ENCODE measurements at regions of chr1 and their contacts with region 1.

Region 1: DNA sequence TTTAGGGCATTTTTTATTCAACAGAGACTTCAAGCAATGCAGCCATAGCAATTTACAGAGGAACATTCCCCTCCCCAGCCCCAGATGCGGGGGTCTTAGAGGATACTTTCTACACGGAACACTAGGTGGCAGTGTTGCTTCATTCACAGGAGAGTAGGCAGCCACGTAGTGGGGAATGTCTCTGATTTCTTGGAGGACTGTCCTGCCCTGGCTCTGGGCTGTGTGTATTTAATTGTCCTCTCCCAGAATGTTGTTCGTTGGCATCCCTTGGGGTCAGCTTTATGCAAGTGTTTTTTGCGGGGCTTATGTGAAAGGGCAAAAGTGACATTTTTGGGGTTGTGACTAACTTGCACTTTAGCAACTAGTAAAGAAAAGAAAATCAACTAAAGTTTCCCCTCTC is 96.9 kb downstream of the PAPPA2 start:
- DNase-seq: peak; percentile 79
- H3K4me3 ChIP-seq: no peak overlapping the region
- H3K27ac ChIP-seq: no peak overlapping the region
- H3K4me1 ChIP-seq: no peaks in the 10 kb centered on the region
- H3K27me3 ChIP-seq: peaks cover 23% of the 10 kb centered on the region
- CTCF ChIP-seq: peak; percentile 89

Region 2: DNA sequence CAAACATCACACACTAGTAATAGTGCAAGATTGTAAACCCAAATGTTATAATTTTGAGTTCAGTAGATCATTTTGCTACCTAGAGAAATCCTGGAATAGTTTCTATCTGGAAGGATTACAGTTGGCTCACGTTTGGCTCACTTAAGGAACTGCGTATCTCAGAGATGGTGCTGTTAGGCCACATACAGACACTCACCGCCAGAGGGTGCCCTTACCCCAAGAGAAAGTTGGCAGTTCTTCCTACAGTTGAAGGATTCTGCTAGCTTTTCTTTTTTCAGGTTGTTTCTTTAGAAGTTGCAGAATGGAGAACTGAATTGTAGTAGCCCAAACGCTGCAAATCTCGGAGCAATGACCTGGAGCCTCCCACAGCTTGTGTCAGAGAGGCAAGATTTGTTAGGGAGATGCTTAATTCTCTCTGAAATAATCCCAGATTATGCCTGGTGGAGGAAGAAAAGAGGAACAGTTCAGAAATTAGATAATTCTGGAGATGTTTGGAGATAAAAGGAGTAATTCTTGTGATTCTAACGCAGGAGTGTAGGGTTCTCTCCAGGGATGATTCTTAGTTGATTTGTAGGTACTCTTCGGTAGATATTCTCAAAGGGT is 184.8 kb before region 1 on chr1:
- CTCF ChIA-PET with region 1: no interaction called
- POLR2A ChIA-PET with region 1: no interaction called
- intact Hi-C with region 1: loop called (anchors 10 kb)
- DNase-seq: peak; percentile 75
- H3K4me3 ChIP-seq: no peak overlapping the region
- H3K27ac ChIP-seq: no peak overlapping the region
- H3K4me1 ChIP-seq: no peaks in the 10 kb centered on the region
- H3K27me3 ChIP-seq: no peaks in the 10 kb centered on the region
- CTCF ChIP-seq: peak; percentile 90

Region 3: GRCh38 chr1:176691251-176692228 is 131.7 kb after region 1 on chr1:
- CTCF ChIA-PET with region 1: interaction called, 5 read pairs
- POLR2A ChIA-PET with region 1: no interaction called
- intact Hi-C with region 1: loop called (anchors 1 kb)
- DNase-seq: peak; percentile 54
- H3K4me3 ChIP-seq: no peak overlapping the region
- H3K27ac ChIP-seq: no peak overlapping the region
- H3K4me1 ChIP-seq: no peaks in the 10 kb centered on the region
- H3K27me3 ChIP-seq: peaks cover 4% of the 10 kb centered on the region
- CTCF ChIP-seq: peak; percentile 80

Region 4: GRCh38 chr1:176741181-176741580 is 181.3 kb after region 1 on chr1:
- CTCF ChIA-PET with region 1: no interaction called
- POLR2A ChIA-PET with region 1: no interaction called
- intact Hi-C with region 1: loop called (anchors 5 kb)
- DNase-seq: no peak
- H3K4me3 ChIP-seq: no peak overlapping the region
- H3K27ac ChIP-seq: no peak overlapping the region
- H3K4me1 ChIP-seq: no peaks in the 10 kb centered on the region
- H3K27me3 ChIP-seq: peaks cover 51% of the 10 kb centered on the region
- CTCF ChIP-seq: no peak

Region 5: GRCh38 chr1:176843352-176844297 is 283.7 kb after region 1 on chr1:
- CTCF ChIA-PET with region 1: no interaction called
- POLR2A ChIA-PET with region 1: no interaction called
- intact Hi-C with region 1: loop called (anchors 1 kb)
- DNase-seq: peak; percentile 65
- H3K4me3 ChIP-seq: no peak overlapping the region
- H3K27ac ChIP-seq: no peak overlapping the region
- H3K4me1 ChIP-seq: peaks cover 3% of the 10 kb centered on the region
- H3K27me3 ChIP-seq: no peaks in the 10 kb centered on the region
- CTCF ChIP-seq: peak; percentile 59

Region 6: DNA sequence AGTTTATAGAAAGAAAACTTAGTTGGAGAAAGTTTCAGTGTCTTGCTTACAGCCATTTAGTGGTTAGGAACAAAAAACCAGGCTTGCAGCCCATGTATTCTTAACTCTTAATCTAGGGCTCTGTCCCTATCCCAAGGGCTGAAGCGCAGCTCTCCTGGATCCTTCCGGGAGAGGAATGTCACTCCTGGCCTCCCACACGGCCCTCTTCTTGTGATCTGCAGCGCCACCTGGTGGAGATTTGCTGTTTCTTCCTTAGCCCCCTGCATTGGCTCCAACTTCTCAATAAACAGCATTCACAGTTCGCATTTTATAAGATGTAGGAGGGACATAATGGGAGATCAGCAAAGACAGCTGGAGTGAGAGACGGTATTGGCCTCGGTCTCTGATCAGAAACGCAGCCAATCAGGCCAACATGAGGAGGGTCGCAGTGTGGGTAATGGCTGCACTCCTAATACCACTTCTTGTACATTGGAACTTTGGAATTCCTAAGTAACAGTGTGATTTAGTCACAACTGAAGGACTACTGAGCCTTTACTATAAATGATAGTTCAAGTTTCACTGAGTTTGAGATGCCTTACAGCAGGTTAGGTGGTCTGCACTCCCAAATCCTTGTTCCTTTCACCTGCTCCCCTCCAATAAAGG is 321.2 kb after region 1 on chr1:
- CTCF ChIA-PET with region 1: interaction called, 6 read pairs
- POLR2A ChIA-PET with region 1: no interaction called
- intact Hi-C with region 1: loop called (anchors 1 kb)
- DNase-seq: peak; percentile 84
- H3K4me3 ChIP-seq: no peak overlapping the region
- H3K27ac ChIP-seq: no peak overlapping the region
- H3K4me1 ChIP-seq: no peaks in the 10 kb centered on the region
- H3K27me3 ChIP-seq: no peaks in the 10 kb centered on the region
- CTCF ChIP-seq: peak; percentile 94

Measured in A673 (cell line).